Heart right ventricle (tissue), 16 donors: ENCODE measurements at regions of chr11 and their contacts with region 1.

Region 1: GRCh38 chr11:40230821-40231220 is 1228.6 kb downstream of the LRRC4C start:
- DNase-seq: no peak
- ATAC-seq: no peak
- H3K4me3 ChIP-seq: no peak overlapping the region
- H3K27ac ChIP-seq: no peak overlapping the region
- H3K4me1 ChIP-seq: no peaks in the 10 kb centered on the region
- H3K27me3 ChIP-seq: no peaks in the 10 kb centered on the region
- CTCF ChIP-seq: no peak

Region 2: DNA sequence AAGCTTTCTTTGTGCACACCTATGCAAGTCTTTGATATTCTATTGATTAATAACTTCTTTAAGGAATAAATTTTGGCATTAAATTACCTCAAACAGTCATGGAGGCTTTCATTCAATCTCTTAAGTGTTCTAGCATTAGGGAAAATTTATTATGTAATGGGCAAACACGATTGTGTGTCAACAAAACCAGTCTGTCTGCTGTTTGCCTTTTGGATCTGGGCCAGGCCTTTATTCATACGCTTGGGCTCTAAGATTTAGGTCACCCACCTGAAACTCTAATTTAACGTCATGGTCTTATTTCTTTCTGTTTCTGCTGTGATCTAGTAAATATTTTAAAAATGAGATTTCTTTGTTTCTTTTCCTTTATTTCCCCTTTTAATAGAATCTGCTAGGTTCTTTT is 42.0 kb before region 1 on chr11:
- intact Hi-C with region 1: loop called in 1 of 10 experiments (anchors 1 kb)
- DNase-seq: no peak
- ATAC-seq: no peak
- H3K4me3 ChIP-seq: no peak overlapping the region
- H3K27ac ChIP-seq: no peak overlapping the region
- H3K4me1 ChIP-seq: no peaks in the 10 kb centered on the region
- H3K27me3 ChIP-seq: no peaks in the 10 kb centered on the region
- CTCF ChIP-seq: no peak